ENCODE measurements at regions of chr1 and their contacts with region 1.

Region 1: GRCh38 chr1:30801771-30802198 is 44.2 kb upstream of the LAPTM5 start:
- DNase-seq: peak in 1 of 2 experiments; percentile 99
- H3K4me3 ChIP-seq: peak overlapping the region in 1 of 4 experiments; percentile 43; a peak in 4 of 8 replicates
- H3K27ac ChIP-seq: no peak overlapping the region
- H3K4me1 ChIP-seq: peaks cover 10 to 30% (median 17%) of the 10 kb centered on the region in 4 experiments
- H3K27me3 ChIP-seq: peaks cover 0 to 13% (median 4%) of the 10 kb centered on the region in 4 experiments; a peak in 2 of 7 replicates
- CTCF ChIP-seq: peak; percentile 94 to 96 (median 95)
- EP300 ChIP-seq: no peak
- POLR2A ChIP-seq: no peak
- RAD21 ChIP-seq: peak; percentile 97 to 100

Region 2: DNA sequence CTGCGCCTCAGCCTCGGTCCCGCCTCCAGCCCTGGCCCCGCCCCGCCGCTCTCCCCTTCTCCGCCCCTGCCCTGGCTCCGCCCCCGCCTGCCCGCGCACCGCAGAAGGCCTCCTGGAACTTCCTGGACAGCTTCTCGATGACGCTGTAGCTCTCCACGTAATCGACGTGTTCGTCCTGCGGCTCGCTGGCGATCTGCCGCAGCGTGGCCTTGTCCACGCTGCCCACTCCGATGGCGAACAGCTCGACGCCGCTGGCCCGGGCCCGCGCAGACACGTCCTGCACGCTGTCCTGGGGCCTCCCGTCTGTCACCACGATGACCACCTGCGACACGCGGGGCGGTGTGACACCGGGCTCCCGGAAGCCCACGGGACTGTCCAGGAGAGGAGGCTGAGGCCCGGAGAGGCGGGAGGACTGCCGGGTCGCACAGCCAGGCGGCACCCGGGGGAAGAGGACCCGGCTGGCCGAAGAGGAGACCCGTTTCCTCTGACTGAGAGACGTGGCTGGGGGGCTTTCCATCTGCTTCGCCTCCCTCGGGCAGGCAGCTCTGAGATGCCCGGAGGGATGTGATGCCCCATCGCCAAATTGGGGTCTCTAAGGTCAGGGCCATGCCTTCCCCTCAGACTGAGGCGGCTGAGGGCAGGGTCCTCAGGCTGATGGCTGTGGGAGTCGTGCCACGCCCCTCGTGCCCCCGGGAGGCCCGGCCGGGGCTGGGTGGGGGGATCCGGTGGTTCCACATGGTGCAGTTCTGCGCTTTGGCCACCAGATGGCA is 83.0 kb before region 1 on chr1:
- CTCF ChIA-PET with region 1: interaction called, 48 read pairs
- POLR2A ChIA-PET with region 1: interaction called, 3 read pairs
- DNase-seq: peak in 1 of 2 experiments; percentile 97
- H3K4me3 ChIP-seq: peak overlapping the region; percentile 35 to 67 (median 56)
- H3K27ac ChIP-seq: no peak overlapping the region
- H3K4me1 ChIP-seq: peaks cover 0 to 4% (median 1%) of the 10 kb centered on the region in 4 experiments; a peak in 4 of 7 replicates
- H3K27me3 ChIP-seq: no peaks in the 10 kb centered on the region; a peak in 1 of 7 replicates
- CTCF ChIP-seq: peak in 1 of 3 experiments; percentile 89; a peak in 1 of 4 replicates
- EP300 ChIP-seq: no peak
- POLR2A ChIP-seq: no peak
- RAD21 ChIP-seq: peak; percentile 98 to 99; a peak in 2 of 4 replicates

Region 3: DNA sequence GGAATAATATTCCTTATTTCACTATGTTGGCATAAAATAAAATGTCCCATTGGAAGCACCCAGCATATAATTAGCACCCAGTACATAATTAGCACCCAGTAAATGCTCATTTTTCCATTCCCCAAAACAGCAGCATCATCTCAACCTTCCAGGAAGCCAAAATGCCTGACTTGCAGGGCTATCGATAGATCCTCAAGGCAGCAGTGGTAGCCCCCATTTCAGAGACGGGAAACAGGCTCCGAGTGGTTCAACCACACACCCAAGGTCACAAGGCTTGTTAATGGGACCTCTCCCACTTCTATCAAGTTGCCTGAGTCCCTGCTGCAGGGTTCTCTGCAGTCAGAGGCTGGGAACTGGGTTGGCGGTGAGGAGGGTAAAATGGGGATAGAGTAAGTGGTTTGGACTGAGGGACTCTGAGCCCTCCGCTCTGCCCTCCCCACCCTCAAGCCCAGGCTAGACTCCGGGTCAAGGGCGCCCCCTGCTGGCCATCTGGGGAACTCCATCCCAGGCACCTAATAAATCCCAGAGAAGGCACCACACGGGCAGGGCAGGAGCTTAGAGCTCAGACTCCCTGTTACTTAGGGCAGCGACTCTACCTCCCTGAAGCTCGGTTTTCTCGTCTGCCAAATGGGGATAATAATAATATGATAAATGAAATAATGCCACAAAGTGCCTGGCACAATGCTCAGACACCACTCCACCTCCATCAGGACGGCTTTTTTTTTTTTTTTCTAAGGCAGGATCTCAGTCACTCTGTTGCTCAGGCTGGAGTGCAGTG is 22.3 kb before region 1 on chr1:
- CTCF ChIA-PET with region 1: interaction called, 329 read pairs
- POLR2A ChIA-PET with region 1: no interaction called
- DNase-seq: peak; percentile 70 to 100
- H3K4me3 ChIP-seq: no peak overlapping the region
- H3K27ac ChIP-seq: no peak overlapping the region
- H3K4me1 ChIP-seq: peaks cover 0 to 4% (median 2%) of the 10 kb centered on the region in 4 experiments; a peak in 4 of 7 replicates
- H3K27me3 ChIP-seq: no peaks in the 10 kb centered on the region
- CTCF ChIP-seq: peak; percentile 94 to 96 (median 95)
- EP300 ChIP-seq: no peak
- POLR2A ChIP-seq: no peak
- RAD21 ChIP-seq: peak; percentile 97 to 99

Region 4: DNA sequence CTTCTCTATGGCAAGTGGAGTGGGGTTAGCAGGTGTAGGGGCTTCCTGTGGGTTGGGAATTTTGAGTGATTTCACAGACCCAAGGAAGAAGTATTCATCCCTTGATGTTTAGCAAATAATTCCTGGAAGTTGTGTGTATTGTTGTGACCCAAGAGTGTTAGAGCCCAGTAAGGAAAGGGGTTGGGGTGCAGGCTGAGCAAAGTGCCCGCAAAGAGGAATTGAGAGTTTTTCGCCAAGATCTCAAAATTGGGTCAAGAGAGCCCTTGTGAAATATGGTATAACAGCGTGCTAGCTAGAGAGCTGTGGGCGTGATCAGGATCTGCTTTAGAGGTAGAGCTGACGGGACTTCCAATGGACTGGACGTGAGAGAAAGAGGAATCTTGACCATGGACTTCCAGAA is 28.8 kb after region 1 on chr1:
- CTCF ChIA-PET with region 1: interaction called, 158 read pairs
- POLR2A ChIA-PET with region 1: no interaction called
- DNase-seq: no peak
- H3K4me3 ChIP-seq: no peak overlapping the region
- H3K27ac ChIP-seq: no peak overlapping the region
- H3K4me1 ChIP-seq: no peaks in the 10 kb centered on the region
- H3K27me3 ChIP-seq: peaks cover 0 to 5% (median under 1%) of the 10 kb centered on the region in 4 experiments; a peak in 5 of 7 replicates
- CTCF ChIP-seq: no peak
- EP300 ChIP-seq: no peak
- POLR2A ChIP-seq: no peak
- RAD21 ChIP-seq: no peak

Region 5: DNA sequence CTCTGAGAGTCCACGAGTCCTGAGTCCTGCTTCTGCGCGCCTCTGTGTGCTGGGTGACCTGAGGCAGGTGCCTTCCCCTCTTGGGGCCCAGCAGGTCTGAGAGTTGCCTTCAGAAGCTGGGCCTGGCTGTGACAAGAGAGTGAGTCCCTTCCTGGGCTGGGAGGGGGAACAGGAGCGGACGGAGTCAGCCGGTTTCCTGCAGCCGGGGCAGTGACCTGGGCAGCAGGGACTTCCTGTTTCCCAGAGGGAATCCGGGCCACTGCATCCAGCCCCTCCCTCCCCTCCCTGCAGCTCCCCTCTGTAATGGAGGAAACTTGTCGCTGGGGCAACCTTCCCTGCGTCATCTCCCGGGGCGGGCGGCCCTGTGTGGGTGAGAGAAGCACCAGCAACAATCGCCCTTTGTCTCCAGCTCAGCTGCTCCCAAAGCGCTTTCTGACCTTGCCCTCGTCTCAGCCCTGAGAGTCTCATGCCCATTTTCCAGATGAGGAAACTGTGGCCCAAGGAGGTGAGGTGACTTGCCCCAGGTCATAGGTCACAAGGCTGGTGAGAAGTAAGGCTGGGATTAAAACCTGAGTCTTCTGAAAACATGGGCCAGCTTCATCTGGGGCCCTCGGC is 45.7 kb after region 1 on chr1:
- CTCF ChIA-PET with region 1: interaction called, 52 read pairs
- POLR2A ChIA-PET with region 1: interaction called, 9 read pairs
- DNase-seq: peak in 1 of 2 experiments; percentile 72
- H3K4me3 ChIP-seq: no peak overlapping the region
- H3K27ac ChIP-seq: no peak overlapping the region; the same call in 1 of the 2 replicates
- H3K4me1 ChIP-seq: peaks cover 0 to 20% (median 15%) of the 10 kb centered on the region in 4 experiments; a peak in 6 of 7 replicates
- H3K27me3 ChIP-seq: no peaks in the 10 kb centered on the region
- CTCF ChIP-seq: no peak
- EP300 ChIP-seq: no peak
- POLR2A ChIP-seq: no peak
- RAD21 ChIP-seq: no peak

Region 6: DNA sequence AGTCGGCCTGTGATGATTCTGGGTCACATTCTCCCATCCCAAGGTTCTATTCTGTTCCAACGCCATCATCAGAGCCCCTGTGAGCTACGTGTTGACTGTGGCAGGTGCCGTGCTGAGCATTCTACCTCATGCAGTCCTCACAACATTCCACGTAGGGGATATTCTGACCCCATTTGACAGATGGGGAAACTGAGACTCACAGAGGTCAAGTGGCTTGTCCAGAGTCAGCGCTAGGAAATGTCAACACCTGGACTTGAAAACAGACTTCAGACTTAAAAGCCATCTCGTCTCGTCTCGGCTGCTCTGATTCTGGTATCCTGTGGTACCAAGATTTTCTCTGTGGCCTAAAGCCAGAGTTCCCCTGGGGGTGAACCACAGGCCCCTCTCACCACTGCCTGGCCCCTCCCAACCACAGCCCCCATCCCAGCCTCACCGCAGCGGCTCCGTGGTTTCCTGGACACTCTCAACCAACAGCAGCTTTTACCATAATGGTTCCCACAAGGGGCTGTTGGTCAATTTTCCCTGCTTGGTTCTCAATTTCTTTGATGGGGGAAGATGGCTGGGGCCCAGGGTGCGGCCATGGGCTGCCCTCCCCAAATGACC is 67.1 kb after region 1 on chr1:
- CTCF ChIA-PET with region 1: interaction called, 41 read pairs
- POLR2A ChIA-PET with region 1: no interaction called
- DNase-seq: no peak
- H3K4me3 ChIP-seq: no peak overlapping the region
- H3K27ac ChIP-seq: no peak overlapping the region
- H3K4me1 ChIP-seq: peaks cover 0 to 8% (median 5%) of the 10 kb centered on the region in 4 experiments; a peak in 4 of 7 replicates
- H3K27me3 ChIP-seq: no peaks in the 10 kb centered on the region; a peak in 1 of 7 replicates
- CTCF ChIP-seq: no peak
- EP300 ChIP-seq: no peak
- POLR2A ChIP-seq: no peak
- RAD21 ChIP-seq: no peak

Region 7: DNA sequence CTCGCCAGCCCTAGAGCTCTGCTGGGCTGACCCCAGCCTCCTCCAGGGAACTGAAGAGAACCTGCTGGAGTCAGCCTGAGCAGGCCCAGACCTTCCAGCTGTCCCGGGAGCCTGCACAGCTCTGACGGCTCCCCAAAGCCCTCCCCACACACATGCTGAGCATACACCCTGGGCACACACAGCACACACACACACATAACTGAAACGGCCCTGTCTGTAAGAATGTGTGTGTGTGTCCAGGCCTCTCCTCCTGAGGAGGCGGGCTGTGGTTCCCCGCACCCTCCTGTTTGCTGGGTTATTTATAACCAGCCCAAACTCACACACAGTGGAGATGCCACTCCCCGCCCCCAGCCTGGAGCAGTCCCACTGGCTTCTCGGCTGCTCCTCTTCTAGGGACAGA is 86.6 kb after region 1 on chr1:
- CTCF ChIA-PET with region 1: interaction called, 33 read pairs
- POLR2A ChIA-PET with region 1: interaction called, 3 read pairs
- DNase-seq: no peak
- H3K4me3 ChIP-seq: no peak overlapping the region
- H3K27ac ChIP-seq: no peak overlapping the region
- H3K4me1 ChIP-seq: peaks cover 9 to 29% (median 18%) of the 10 kb centered on the region in 4 experiments
- H3K27me3 ChIP-seq: no peaks in the 10 kb centered on the region; a peak in 1 of 7 replicates
- CTCF ChIP-seq: no peak
- EP300 ChIP-seq: no peak
- POLR2A ChIP-seq: no peak
- RAD21 ChIP-seq: no peak